ENCODE measurements at regions of chr5 and their contacts with region 1.

Region 1: DNA sequence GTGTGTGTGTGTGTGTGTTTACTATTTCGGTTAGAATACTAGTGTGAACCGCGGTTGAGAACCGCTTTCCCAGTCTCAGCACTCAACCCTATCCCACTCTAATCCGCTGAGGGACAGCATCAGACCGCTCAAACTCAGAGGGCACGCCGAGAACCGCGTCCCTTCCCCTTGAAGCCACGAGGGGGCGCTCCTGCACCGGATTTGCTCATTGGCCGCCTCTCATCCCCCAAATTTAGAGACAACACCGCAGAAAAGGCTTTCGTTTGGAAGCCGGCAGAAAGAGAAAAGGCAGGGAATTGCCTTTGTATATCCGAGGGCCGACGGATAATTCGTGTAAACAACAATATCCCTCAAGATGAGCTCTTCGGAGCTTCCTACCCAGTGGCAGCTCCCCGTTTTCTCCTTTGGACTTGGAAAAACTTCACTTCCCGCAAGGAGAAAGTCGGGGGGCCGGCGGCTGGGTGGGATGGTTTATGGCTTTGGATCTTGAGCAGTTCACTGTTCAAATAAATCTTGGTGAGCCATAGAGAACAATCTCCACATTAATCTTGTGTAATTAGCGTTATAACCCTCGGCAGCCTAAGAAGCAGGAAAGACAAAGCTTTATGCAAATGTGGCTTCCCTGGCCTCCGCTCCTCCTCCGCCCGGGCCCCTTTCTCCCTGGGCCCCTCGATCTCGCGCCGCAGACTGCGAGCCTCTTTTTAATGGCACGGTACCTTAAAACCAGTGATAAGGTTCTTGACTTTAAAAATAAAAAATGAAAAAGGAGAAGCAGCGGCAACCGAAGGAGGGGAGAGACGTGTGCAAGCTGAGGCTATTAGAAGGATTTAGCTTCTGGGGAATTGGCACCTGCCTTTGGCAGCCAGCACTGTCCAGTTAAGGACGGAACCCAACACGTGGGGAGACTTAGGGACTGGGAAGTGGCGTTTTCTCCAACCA is 296.8 kb downstream of the PARP8 start:
- DNase-seq: peak; percentile 89
- H3K4me3 ChIP-seq: peak overlapping the region; percentile 59
- H3K27ac ChIP-seq: peak overlapping the region; percentile 43
- H3K4me1 ChIP-seq: peaks cover 12% of the 10 kb centered on the region
- H3K27me3 ChIP-seq: no peaks in the 10 kb centered on the region
- CTCF ChIP-seq: peak; percentile 98

Region 2: GRCh38 chr5:51347704-51348103 is 384.5 kb after region 1 on chr5:
- CTCF ChIA-PET with region 1: interaction called, 4 read pairs
- POLR2A ChIA-PET with region 1: no interaction called
- intact Hi-C with region 1: loop called (anchors 10 kb)
- DNase-seq: peak; percentile 31
- H3K4me3 ChIP-seq: no peak overlapping the region
- H3K27ac ChIP-seq: no peak overlapping the region
- H3K4me1 ChIP-seq: no peaks in the 10 kb centered on the region
- H3K27me3 ChIP-seq: no peaks in the 10 kb centered on the region
- CTCF ChIP-seq: peak; percentile 50; the same call in 1 of the 2 replicates

Region 3: DNA sequence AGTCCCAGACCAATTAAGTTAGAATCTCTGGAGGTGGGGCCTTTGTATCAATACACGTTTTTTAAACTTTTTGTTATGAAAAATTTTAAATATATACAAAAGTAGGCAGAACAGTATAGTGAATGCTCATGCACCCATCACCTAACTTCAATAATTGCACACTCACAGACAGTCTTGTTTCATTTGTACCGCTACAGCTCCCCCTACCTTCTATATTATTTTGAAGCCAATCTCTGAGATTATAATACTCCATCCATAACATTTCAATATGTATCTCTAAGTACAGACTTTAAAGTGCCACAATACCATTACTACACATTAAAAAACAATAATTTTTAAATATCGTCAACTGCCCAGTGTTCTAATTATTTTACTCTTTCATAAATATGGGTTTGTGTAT is 452.9 kb after region 1 on chr5:
- CTCF ChIA-PET with region 1: no interaction called
- POLR2A ChIA-PET with region 1: no interaction called
- intact Hi-C with region 1: loop called (anchors 2 kb)
- DNase-seq: peak; percentile 58
- H3K4me3 ChIP-seq: no peak overlapping the region
- H3K27ac ChIP-seq: no peak overlapping the region
- H3K4me1 ChIP-seq: no peaks in the 10 kb centered on the region
- H3K27me3 ChIP-seq: no peaks in the 10 kb centered on the region
- CTCF ChIP-seq: peak; percentile 60; the same call in 1 of the 2 replicates

Region 4: DNA sequence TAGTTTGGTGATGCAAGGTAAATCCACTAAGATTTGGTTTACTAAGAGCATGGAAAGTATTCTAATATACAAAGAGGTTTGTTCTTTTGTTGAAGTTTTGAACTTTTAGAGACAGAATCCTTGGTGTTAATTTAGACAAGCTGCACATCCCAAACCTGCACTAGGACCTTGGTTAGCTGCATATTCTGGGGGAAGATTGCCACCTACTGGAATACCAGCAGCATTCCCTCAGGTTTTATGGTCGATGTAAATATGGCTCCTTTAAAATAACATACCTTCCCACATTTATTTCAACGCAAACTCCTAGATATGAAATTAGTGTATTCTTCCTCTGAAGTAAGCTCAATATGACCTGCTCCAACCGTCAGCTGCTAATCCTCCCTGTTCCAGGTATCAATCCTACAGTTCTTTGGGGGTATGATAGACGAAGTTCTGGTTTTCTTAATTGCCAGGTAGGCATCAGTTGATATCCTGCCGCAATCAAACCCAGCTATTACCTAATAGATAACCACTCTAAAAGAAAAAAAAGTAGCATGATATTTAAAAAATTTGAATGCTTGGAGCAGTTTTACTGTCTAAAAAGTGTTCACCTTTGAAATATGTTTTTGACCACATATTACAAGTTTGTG is 1044.1 kb after region 1 on chr5:
- CTCF ChIA-PET with region 1: no interaction called
- POLR2A ChIA-PET with region 1: no interaction called
- intact Hi-C with region 1: loop called (anchors 1 kb)
- DNase-seq: peak; percentile 72
- H3K4me3 ChIP-seq: no peak overlapping the region
- H3K27ac ChIP-seq: no peak overlapping the region
- H3K4me1 ChIP-seq: no peaks in the 10 kb centered on the region
- H3K27me3 ChIP-seq: no peaks in the 10 kb centered on the region
- CTCF ChIP-seq: peak; percentile 84

Region 5: GRCh38 chr5:52441768-52442167 is 1478.6 kb after region 1 on chr5:
- CTCF ChIA-PET with region 1: interaction called, 12 read pairs
- POLR2A ChIA-PET with region 1: no interaction called
- intact Hi-C with region 1: no loop called
- DNase-seq: no peak
- H3K4me3 ChIP-seq: no peak overlapping the region
- H3K27ac ChIP-seq: no peak overlapping the region
- H3K4me1 ChIP-seq: no peaks in the 10 kb centered on the region
- H3K27me3 ChIP-seq: no peaks in the 10 kb centered on the region
- CTCF ChIP-seq: no peak

Region 6: GRCh38 chr5:52657247-52657645 is 1694.0 kb after region 1 on chr5:
- CTCF ChIA-PET with region 1: interaction called, 3 read pairs
- POLR2A ChIA-PET with region 1: no interaction called
- intact Hi-C with region 1: loop called (anchors 2 kb)
- DNase-seq: peak; percentile 77
- H3K4me3 ChIP-seq: peak overlapping the region; percentile 8
- H3K27ac ChIP-seq: peak overlapping the region; percentile 37
- H3K4me1 ChIP-seq: peaks cover 13% of the 10 kb centered on the region
- H3K27me3 ChIP-seq: no peaks in the 10 kb centered on the region
- CTCF ChIP-seq: peak; percentile 58